Psoas muscle (tissue), 8 donors: ENCODE measurements at regions of chr18 and their contacts with region 1.

Region 1: GRCh38 chr18:3760741-3761140 is 310.8 kb downstream of the TGIF1 start:
- DNase-seq: no peak
- ATAC-seq: no peak
- H3K4me3 ChIP-seq: no peak overlapping the region
- H3K27ac ChIP-seq: no peak overlapping the region
- H3K4me1 ChIP-seq: no peaks in the 10 kb centered on the region
- H3K27me3 ChIP-seq: no peaks in the 10 kb centered on the region
- CTCF ChIP-seq: no peak

Region 2: DNA sequence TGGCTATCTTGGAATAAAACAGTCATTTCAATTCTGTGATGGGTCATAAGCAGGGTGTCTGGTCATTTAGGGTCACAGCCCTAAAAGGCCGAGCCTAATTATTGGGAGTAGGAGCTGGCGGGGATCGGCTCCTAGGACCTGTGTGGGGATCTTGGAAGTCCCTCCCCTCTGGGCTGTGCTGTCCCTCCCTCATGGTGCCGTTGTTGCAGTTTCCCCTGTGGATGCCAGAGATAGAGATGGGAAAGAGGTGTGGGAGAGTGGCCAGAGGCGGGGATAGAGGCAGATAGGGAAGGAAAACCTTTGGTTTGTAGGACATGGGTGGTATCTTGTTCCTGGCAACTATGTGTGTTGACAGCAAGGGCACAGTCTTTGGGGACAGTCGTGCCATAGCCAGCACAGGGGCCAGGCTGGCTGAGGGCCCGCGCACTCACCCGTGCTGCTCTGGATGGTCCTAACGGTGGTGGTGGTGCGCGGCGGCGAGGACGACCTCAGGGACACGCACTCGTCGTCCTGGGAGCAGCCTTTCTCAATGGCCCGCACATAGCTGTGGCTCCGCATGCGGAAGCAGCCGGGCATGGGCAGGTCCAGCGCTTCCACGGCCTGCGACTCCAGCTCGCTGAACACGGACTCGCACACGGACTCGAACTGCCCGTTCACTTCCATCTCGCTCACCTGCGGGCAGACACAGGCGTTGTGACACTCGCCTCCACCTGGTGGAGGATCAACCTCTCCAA is 31.9 kb before region 1 on chr18:
- intact Hi-C with region 1: loop called in 1 of 2 experiments (anchors 1 kb)
- DNase-seq: no peak
- ATAC-seq: no peak
- H3K4me3 ChIP-seq: no peak overlapping the region
- H3K27ac ChIP-seq: no peak overlapping the region
- H3K4me1 ChIP-seq: no peaks in the 10 kb centered on the region
- H3K27me3 ChIP-seq: peaks cover 0 to 4% (median 0%) of the 10 kb centered on the region in 3 donors
- CTCF ChIP-seq: no peak